ENCODE measurements at regions of chr19 and their contacts with region 1.

Region 1: DNA sequence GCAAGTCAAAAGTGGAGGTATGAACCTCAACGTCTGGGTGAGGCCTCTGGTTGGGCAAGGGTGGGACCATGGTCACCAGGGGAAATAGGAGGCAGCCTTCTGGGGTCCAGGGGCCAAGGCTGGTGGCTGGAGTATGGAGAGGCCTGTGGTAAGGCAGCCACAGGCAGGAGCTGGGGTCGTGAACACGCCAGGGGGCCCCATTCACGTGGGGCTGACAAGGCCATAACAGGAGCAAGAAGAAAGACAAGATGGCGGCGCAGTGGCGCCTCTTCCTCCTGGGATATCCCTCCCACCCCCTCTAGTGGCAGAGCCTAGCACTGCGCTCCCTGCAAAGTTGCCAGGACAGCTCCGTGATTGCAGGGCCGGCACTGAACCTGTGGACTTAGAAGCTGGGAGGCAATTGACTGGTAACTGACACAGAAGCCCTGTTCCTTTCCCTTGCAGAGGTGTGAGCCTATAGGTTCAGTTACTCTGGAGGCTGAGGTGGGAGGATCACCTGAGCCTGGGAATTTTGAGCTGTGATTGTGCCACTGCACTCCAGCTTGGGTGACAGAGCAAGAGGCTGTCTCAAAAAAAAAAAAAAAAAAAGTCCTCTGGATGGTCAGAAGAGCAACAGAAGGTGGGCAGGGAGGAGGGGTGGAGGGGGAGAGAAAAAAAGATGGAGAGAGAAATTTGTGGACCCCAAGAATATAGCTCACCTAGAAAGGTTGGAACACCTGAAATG is 19.7 kb upstream of the EDDM13 start:
- DNase-seq: peak; percentile 85 to 91 (median 90)
- H3K4me3 ChIP-seq: peak overlapping the region in 1 of 7 experiments; percentile 7
- H3K27ac ChIP-seq: no peak overlapping the region
- H3K4me1 ChIP-seq: no peaks in the 10 kb centered on the region
- H3K27me3 ChIP-seq: no peaks in the 10 kb centered on the region

Region 2: DNA sequence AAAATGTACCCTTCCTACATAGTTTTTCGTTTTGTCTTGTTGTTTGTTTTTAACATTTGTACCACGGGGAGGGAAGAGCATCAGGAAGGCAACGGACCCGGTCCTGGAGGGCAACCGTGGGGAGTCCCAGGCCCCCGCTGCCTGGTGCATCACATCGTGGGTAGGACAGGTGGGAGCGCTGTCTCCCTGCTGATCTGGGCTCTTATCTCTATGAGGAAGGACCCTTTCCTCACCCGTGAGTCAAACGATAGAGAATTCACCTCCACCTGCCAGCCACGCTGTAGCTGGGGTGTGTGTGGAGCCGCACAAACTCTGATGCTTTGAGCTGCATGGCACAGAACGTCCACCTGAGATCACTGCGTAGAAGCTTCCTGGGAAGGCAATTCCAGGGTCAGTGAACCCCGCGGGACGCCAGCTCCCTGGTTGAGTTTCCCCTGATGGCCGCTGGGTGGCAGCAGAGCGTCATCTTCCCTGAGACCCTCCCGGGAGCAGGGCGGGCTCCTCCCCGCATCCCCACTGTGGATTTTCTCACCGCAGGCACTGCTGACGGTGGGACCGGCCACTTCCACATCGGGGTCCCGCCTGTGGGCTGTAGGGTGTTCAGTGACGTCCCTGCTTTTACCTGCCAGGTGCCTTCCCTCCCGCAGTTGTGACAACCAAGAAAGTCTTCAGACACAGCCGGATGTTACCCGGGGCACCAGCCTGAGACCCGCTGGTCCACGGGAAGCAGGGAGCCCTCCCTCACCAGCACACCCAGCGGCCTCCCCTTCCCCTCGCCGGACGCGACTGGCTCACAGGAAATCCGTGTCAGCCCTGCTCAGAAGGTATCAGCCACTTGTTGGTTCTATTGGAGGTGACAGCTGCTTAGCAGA is 186.5 kb before region 1 on chr19:
- CTCF ChIA-PET with region 1: interaction called, 17 read pairs
- POLR2A ChIA-PET with region 1: no interaction called
- DNase-seq: peak; percentile 69 to 84 (median 74)
- H3K4me3 ChIP-seq: peak overlapping the region; percentile 11 to 86 (median 69)
- H3K27ac ChIP-seq: no peak overlapping the region
- H3K4me1 ChIP-seq: peaks cover 0 to 14% (median 10%) of the 10 kb centered on the region in 4 experiments
- H3K27me3 ChIP-seq: peaks cover 0 to 11% (median 3%) of the 10 kb centered on the region in 5 experiments

Region 3: DNA sequence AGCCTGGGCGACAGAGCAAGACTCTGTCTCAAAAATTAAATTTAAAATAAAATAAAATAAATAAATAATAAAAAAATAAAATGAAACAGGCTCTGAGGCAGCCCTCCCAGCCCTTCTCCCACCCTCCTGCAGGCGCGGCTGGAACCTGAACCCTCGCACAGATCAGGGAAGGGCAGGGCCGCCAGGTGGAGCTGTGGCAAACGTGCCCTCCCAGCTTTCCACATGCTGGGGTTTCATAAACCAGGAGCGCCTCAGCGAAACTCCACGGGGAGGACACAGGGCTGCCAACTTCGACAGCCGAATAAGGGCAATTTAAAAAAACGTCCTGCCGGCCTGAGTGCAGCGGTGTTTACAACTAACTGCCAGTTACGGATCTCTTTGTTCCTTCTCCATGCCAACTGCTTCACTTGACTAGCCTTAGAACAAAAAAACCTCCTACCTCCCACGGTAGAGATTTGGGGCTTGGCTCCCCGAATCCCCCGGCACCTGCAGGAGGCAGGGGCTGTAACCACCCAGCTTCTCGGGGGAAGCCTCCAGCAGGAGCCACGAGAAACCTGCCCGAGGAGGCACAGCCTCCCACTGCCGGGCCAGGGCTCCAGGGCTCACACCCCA is 147.7 kb before region 1 on chr19:
- CTCF ChIA-PET with region 1: interaction called, 16 read pairs
- POLR2A ChIA-PET with region 1: no interaction called
- DNase-seq: peak; percentile 84 to 91 (median 88)
- H3K4me3 ChIP-seq: peak overlapping the region in 4 of 7 experiments; percentile 25 to 58 (median 38)
- H3K27ac ChIP-seq: peak overlapping the region in 1 of 2 experiments; percentile 65
- H3K4me1 ChIP-seq: peaks cover 6 to 85% (median 79%) of the 10 kb centered on the region in 4 experiments
- H3K27me3 ChIP-seq: no peaks in the 10 kb centered on the region

Region 4: DNA sequence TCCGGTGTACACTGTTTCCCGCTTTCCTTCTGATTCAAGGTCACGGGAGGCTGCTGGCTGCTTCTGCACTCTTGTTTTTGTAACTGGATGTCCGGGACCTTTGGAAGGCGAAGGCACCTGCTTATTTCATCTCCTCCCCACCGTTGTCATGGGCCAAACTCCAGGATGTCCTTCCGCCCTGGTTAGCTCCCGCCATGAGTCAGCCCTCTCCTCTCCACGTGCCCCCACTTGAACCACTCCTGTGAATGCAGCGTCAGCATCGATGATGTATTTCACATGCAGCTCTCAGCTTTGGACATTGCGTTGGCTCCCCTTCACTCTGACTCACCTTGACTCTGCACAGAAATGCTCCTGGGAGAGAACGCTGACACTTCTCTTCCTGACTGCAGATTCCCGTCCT is 82.6 kb before region 1 on chr19:
- CTCF ChIA-PET with region 1: interaction called, 15 read pairs
- POLR2A ChIA-PET with region 1: no interaction called
- DNase-seq: no peak
- H3K4me3 ChIP-seq: no peak overlapping the region
- H3K27ac ChIP-seq: no peak overlapping the region
- H3K4me1 ChIP-seq: peaks cover 0 to 6% (median 3%) of the 10 kb centered on the region in 4 experiments
- H3K27me3 ChIP-seq: peaks cover 0 to 18% (median 2%) of the 10 kb centered on the region in 5 experiments

Region 5: GRCh38 chr19:56284746-56285145 is 31.9 kb after region 1 on chr19:
- CTCF ChIA-PET with region 1: no interaction called
- POLR2A ChIA-PET with region 1: no interaction called
- DNase-seq: no peak
- H3K4me3 ChIP-seq: no peak overlapping the region
- H3K27ac ChIP-seq: no peak overlapping the region
- H3K4me1 ChIP-seq: no peaks in the 10 kb centered on the region
- H3K27me3 ChIP-seq: no peaks in the 10 kb centered on the region

Region 6: DNA sequence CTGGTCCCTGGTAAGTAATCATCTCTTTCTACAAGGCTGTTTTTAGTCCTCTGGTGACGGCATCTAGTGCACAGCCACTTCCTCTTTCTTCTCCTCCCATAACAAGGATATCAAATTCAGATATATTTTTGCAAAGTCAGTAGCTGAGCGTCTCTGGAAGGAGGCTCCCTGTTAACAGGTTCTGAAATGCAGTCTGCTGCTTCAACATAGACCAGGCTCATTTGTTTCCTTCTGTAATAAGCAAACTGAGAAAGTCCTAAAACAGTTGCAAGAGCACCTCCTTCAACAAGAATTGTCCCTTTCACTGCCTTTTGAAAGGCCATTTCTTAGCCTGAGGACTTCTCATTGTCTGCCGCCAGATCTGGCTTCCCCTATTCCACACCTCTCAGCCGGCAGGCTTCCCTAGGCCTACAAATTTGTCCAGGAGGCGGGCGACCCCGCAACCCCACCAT is 69.2 kb after region 1 on chr19:
- CTCF ChIA-PET with region 1: interaction called, 12 read pairs
- POLR2A ChIA-PET with region 1: no interaction called
- DNase-seq: peak; percentile 64 to 88 (median 82)
- H3K4me3 ChIP-seq: peak overlapping the region in 3 of 7 experiments; percentile 1 to 41 (median 8)
- H3K27ac ChIP-seq: peak overlapping the region; percentile 53 to 83
- H3K4me1 ChIP-seq: peaks cover 18 to 56% (median 44%) of the 10 kb centered on the region in 4 experiments
- H3K27me3 ChIP-seq: no peaks in the 10 kb centered on the region

Region 7: GRCh38 chr19:56348289-56348877 is 95.5 kb after region 1 on chr19:
- CTCF ChIA-PET with region 1: interaction called, 15 read pairs
- POLR2A ChIA-PET with region 1: no interaction called
- DNase-seq: peak in 2 of 3 donors; percentile 42 to 47
- H3K4me3 ChIP-seq: no peak overlapping the region
- H3K27ac ChIP-seq: no peak overlapping the region
- H3K4me1 ChIP-seq: no peaks in the 10 kb centered on the region
- H3K27me3 ChIP-seq: no peaks in the 10 kb centered on the region